ENCODE measurements at regions of chr17 and their contacts with region 1.

Region 1: GRCh38 chr17:65064452-65065019 is 8.0 kb upstream of the GNA13 start:
- DNase-seq: no peak
- ATAC-seq: no peak
- H3K4me3 ChIP-seq: no peak overlapping the region
- H3K27ac ChIP-seq: no peak overlapping the region
- H3K4me1 ChIP-seq: peaks cover 14% of the 10 kb centered on the region
- H3K27me3 ChIP-seq: no peaks in the 10 kb centered on the region
- CTCF ChIP-seq: no peak
- POLR2A ChIP-seq: no peak

Region 2: GRCh38 chr17:65122836-65123756 is 58.6 kb after region 1 on chr17:
- intact Hi-C with region 1: loop called (anchors 10 kb)
- DNase-seq: peak; percentile 83 to 86 (median 86)
- ATAC-seq: peak; percentile 98
- H3K4me3 ChIP-seq: peak overlapping the region; percentile 31 to 59
- H3K27ac ChIP-seq: peak overlapping the region; percentile 61 to 92 (median 86)
- H3K4me1 ChIP-seq: peaks cover 12% of the 10 kb centered on the region
- H3K27me3 ChIP-seq: no peaks in the 10 kb centered on the region
- CTCF ChIP-seq: no peak
- POLR2A ChIP-seq: peak; percentile 46 to 87 (median 84)

Region 3: DNA sequence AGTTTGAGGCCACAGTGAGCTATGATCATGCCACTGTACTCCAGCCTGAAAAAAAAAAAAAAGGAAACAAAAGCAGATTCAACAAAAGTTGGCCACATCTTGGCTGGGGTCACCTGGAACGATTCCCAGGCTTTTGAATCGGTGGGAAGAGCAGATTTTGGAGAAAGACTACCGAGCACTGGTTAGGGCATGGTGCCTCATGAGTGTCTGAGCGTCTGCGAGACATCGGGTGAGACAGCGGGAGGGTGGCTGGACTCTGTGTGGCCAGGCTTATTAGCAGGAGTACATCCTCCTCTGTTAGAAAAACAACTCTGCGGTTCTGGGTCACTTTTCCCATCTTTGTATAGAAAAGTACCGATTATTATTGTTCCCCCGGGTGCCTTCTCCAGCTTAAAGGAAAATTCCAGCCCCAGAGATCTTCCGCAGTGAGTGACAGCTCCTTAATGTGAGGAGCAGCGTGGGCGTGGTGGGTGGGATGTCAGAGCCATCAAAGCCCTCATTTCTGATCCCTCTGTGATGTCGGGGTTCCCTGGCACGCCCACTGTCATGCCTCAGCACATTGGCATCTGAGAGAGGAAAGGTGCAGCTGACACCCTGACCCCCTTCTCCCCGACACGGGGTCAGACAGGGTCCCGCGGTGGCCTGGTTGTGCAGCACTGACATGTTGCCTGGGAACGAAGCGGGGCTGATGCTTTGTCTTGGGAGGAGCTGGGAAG is 79.5 kb after region 1 on chr17:
- intact Hi-C with region 1: no loop called
- DNase-seq: peak in 1 of 4 donors; percentile 14
- ATAC-seq: no peak
- H3K4me3 ChIP-seq: no peak overlapping the region
- H3K27ac ChIP-seq: no peak overlapping the region
- H3K4me1 ChIP-seq: no peaks in the 10 kb centered on the region
- H3K27me3 ChIP-seq: no peaks in the 10 kb centered on the region
- CTCF ChIP-seq: no peak
- POLR2A ChIP-seq: no peak

Region 4: DNA sequence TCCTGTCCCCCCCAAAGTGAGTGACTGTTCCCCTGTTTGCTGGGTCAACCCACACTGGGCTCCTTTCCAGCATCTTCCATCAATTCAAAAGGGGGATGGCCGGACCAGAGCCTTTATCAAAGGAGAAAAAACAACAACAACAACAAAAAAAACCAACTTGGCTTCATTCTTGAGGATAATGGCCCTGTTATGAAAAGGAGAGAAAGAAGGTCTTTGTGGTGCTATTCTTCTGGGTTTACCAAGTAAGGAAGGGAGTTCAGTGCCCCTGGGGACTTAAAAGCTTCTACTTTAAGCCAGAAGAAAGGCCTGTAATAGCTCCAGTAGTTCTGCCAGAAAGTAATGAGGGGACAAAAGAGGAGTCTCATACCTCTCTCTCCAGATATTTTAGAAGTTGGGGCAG is 144.2 kb after region 1 on chr17:
- intact Hi-C with region 1: no loop called
- DNase-seq: no peak
- ATAC-seq: no peak
- H3K4me3 ChIP-seq: no peak overlapping the region
- H3K27ac ChIP-seq: no peak overlapping the region
- H3K4me1 ChIP-seq: no peaks in the 10 kb centered on the region
- H3K27me3 ChIP-seq: no peaks in the 10 kb centered on the region
- CTCF ChIP-seq: no peak
- POLR2A ChIP-seq: no peak

Measured in body of pancreas (tissue), 4 donors.